Dendritic cell treated with granulocyte-macrophage colony-stimulating factor and Interleukin-4, amounts not matched to agents 40 ng/mL and 50 ng/mL, for 4 days (primary cell): ENCODE measurements at regions of chr6 and their contacts with region 1.

Region 1: GRCh38 chr6:3337521-3338350 is 79.0 kb downstream of the PSMG4 start:
- H3K4me3 Mint-ChIP-seq: peak overlapping the region; percentile 67
- H3K27ac Mint-ChIP-seq: peak overlapping the region; percentile 58
- H3K4me1 Mint-ChIP-seq: peaks cover 40% of the 10 kb centered on the region
- H3K27me3 Mint-ChIP-seq: peaks cover 30% of the 10 kb centered on the region

Region 2: DNA sequence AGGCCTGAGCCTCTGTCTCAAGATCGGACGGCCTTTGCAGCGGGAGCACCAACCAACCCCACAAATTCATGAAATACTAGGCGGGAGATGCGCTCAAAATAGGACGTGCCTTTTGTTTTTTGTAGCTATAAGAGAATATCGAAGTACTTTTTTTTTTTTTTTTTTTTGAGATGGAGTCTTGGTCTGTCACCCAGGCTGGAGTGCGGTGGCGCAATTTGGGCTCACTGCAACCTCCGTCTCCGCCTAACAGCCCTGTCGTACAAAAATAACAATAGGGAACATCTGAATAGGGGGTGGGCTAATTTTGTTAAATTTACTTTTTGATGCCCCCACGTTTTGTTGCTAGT is 174.5 kb before region 1 on chr6:
- intact Hi-C with region 1: no loop called
- H3K4me3 Mint-ChIP-seq: peak overlapping the region; percentile 85
- H3K27ac Mint-ChIP-seq: peak overlapping the region; percentile 83
- H3K4me1 Mint-ChIP-seq: peaks cover 37% of the 10 kb centered on the region
- H3K27me3 Mint-ChIP-seq: peaks cover 42% of the 10 kb centered on the region

Region 3: GRCh38 chr6:3383525-3383924 is 45.8 kb after region 1 on chr6:
- intact Hi-C with region 1: loop called (anchors 10 kb)
- H3K4me3 Mint-ChIP-seq: no peak overlapping the region
- H3K27ac Mint-ChIP-seq: no peak overlapping the region
- H3K4me1 Mint-ChIP-seq: peaks cover 46% of the 10 kb centered on the region
- H3K27me3 Mint-ChIP-seq: peaks cover 52% of the 10 kb centered on the region

Region 4: DNA sequence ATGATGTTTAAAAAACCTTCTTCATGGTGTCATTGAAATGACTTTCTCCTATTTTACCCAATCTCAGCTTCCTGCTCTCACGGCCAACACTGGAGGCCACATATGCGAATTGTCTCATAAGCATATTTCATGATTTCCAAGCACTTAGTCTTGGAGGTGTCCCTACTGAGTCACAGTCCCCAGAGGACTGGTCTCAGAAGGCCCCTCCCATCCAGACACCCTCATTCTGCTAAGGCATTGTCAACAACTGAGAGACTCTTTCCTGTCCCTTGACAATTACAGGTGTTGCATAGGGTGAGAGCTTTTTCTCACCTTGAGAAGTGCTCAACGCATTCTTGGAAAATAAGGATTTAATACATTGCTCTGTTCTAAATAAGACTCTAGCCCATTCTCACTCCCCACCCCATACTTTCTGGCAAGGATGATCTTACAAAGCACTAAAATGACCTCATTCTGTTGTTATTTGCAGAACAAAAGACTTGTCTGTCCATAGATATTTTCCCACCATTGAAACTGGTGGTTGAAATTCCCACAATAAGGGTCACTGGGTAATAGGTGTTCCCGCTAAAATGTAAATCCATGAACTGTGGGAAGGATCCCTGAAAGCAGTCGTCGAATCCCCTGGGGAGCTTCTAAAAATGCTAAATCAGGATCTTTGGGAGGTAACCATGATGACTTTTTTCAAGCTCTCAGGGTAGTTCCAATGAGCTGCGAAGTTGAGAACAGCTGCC is 151.5 kb after region 1 on chr6:
- intact Hi-C with region 1: no loop called
- H3K4me3 Mint-ChIP-seq: no peak overlapping the region
- H3K27ac Mint-ChIP-seq: no peak overlapping the region
- H3K4me1 Mint-ChIP-seq: peaks cover 4% of the 10 kb centered on the region
- H3K27me3 Mint-ChIP-seq: peaks cover 12% of the 10 kb centered on the region